Posterior vena cava (tissue), 2 donors: ENCODE measurements at regions of chr16 and their contacts with region 1.

Region 1: DNA sequence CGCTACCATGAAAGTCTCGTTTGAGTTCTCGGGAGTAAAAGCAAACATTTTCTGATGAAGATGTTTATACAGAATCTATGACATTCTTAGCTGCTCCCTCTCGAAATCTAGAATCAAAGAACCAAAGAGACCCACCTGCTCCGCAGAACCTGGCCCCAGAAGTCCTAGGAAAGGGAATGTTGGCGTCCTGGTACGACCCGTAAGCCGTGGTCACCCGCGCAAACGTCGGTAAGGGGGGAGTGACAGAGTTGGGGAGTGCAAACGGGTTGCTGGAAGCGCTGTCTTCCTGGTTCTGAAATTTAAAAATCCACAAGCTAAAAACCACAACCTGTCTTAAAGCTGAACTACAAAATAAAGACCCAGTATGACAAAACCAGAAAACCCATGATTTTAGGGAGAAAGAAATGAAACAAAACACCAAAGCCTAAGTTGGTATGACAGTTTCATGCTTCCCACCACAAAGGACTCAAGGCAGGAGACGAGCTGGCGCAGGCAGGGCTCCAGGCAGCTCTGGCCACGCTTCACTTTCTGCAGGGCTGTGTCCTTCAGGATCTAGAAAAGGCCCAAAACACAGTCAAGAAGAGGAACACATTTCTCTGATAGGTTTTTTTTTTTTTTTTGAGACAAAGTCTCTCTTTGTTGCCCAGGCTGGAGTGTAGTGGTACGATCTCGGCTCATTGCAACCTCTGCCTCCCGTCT is 75.4 kb downstream of the WDR59 start:
- DNase-seq: no peak

Region 2: DNA sequence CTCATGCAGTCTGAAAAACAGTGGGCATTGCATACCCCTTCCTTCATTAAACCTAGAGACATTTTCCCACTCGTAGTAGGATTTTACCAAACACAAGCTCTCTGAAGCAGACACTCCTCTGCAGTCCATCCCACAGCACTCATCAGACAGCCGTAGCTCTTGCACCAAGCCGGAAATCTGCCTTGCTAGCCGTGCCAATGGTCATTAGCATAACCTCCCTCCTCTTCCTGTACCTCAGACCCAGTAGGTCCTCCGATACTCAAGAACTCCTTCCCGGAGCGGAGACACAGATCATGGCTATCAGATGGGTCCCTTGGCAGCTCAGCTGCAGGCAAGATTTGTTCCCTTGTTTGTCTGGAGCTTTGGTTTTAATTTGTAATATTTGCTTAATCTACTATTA is 1096.0 kb before region 1 on chr16:
- intact Hi-C with region 1: loop called in 1 of 2 experiments (anchors 5 kb)
- DNase-seq: no peak